Activated CD4-positive, alpha-beta memory T cell treated with anti-CD3 and anti-CD28 coated beads, Interleukin-2, amount 10 ng/mL, durations not matched to agents 7 days and 5 days (primary cell): ENCODE measurements at regions of chr12 and their contacts with region 1.

Region 1: DNA sequence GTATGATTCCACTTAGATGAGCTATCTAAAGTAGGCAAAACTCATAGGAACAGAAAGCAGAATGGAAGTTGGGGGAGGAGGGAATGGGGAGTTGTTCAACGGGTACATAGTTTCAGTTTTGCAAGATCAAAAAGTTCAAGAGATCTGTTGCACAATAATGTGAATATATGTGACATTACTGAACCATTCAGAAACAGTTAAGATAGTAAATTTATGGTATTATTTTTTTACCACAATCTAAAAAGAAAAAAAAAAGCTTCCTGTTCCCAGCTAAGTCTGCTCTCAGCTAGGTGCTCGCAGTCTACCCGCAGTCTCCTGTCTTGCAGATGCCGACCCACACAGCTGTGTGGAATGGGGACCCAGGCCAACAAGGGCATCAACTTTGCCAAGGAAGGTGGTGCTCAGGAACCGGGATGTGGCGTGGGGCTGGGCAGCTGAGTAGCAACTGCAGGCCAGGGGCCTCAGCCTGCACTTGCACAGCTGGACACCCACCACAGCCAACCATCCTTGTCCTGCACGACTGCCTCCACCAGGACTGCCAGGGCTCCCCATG is 15.3 kb upstream of the ANO6 start:
- DNase-seq: no peak
- H3K4me3 Mint-ChIP-seq: peak overlapping the region; percentile 18
- H3K27ac Mint-ChIP-seq: no peak overlapping the region
- H3K4me1 Mint-ChIP-seq: peaks cover 20% of the 10 kb centered on the region
- H3K27me3 Mint-ChIP-seq: no peaks in the 10 kb centered on the region

Region 2: DNA sequence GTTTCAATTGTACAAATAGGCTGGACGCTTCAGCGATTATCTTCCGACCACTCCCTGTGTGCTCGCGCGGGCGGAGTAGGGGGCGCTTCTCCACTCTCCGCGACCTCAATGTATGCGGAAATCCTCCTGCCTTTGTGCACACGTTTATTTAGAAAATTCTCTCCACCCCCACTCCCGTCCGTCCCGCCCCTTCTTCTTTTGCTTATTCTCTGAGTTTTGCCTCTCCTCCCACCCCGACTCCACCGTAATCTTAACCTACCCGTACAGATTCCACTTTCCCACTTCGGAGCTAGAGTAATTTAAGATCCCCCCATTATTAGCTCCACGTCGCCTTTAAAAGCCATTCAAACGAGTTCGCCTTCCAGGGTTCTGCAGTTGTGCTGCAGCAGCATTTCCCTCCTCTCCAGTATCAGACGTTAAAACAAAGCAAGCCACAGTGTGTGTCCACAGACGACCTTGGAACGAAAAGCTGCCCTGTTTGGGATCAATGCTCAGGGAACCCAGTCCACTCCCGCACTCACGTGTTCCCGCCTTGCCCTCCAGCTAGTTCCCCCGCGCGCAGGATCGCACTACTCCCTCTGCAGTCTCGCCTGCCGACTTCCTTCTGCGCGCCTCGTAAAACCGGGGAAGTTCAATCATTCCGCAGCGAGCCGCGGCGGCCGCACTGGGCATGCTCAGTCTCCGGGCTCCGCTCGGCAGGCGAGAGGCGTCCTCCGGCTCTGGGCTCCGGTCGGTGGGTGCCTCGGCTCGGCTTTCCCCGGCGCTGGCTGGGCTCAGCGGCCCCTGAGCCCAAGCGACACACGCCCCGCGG is 15.1 kb after region 1 on chr12 and contains the start of gene ANO6:
- CTCF ChIA-PET with region 1: interaction called, 4 read pairs
- POLR2A ChIA-PET with region 1: interaction called, 28 read pairs
- DNase-seq: peak; percentile 78
- H3K4me3 Mint-ChIP-seq: peak within 1 kb of the TSS; percentile 96
- H3K27ac Mint-ChIP-seq: peak within 1 kb of the TSS; percentile 92
- H3K4me1 Mint-ChIP-seq: peaks cover 46% of the 10 kb centered on the region
- H3K27me3 Mint-ChIP-seq: no peaks in the 10 kb centered on the region
- total RNA-seq, gene ANO6: 29.2 to 29.8 TPM